ENCODE measurements at regions of chr4 and their contacts with region 1.

Region 1: GRCh38 chr4:153497988-153498967 is 32.1 kb downstream of the TMEM131L start:
- DNase-seq: no peak
- H3K4me3 ChIP-seq: peak overlapping the region in 1 of 2 donors; percentile 38
- H3K4me3 Mint-ChIP-seq: peak overlapping the region; percentile 57 to 85 (median 80)
- H3K27ac ChIP-seq: peak overlapping the region; percentile 64
- H3K27ac Mint-ChIP-seq: peak overlapping the region; percentile 94 to 99 (median 97)
- H3K4me1 ChIP-seq: peaks cover 98% of the 10 kb centered on the region
- H3K4me1 Mint-ChIP-seq: peaks cover 76 to 100% (median 86%) of the 10 kb centered on the region in 4 donors
- H3K27me3 ChIP-seq: no peaks in the 10 kb centered on the region
- H3K27me3 Mint-ChIP-seq: no peaks in the 10 kb centered on the region

Region 2: DNA sequence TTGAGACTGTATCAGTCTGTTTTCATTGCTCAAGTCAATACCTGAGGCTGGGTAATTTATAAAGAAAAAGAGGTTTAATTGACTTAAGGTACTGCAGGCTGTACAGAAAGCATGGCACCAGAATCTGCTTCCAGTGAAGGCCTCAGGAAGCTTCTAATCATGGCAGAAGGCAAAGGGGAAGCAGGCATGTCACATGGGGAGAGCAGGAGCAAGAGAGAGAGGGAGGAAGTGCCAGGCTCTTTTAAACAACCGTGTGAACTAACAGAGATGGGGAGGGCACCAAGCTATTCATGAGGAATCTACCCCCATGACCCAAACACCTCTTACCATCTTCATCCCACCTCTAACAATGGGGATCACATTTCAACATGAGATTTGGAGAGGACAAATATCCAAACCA is 39.3 kb before region 1 on chr4:
- CTCF ChIA-PET with region 1: no interaction called
- POLR2A ChIA-PET with region 1: no interaction called
- intact Hi-C with region 1: no loop called
- DNase-seq: no peak
- H3K4me3 ChIP-seq: no peak overlapping the region
- H3K4me3 Mint-ChIP-seq: no peak overlapping the region
- H3K27ac ChIP-seq: no peak overlapping the region
- H3K27ac Mint-ChIP-seq: peak overlapping the region in 1 of 7 donors; percentile 52
- H3K4me1 ChIP-seq: no peaks in the 10 kb centered on the region
- H3K4me1 Mint-ChIP-seq: peaks cover under 1 to 3% (median 2%) of the 10 kb centered on the region in 4 donors
- H3K27me3 ChIP-seq: no peaks in the 10 kb centered on the region
- H3K27me3 Mint-ChIP-seq: no peaks in the 10 kb centered on the region

Region 3: GRCh38 chr4:153488006-153488891 is 10.0 kb before region 1 on chr4:
- CTCF ChIA-PET with region 1: interaction called, 34 read pairs
- POLR2A ChIA-PET with region 1: interaction called, 546 read pairs
- intact Hi-C with region 1: loop called (anchors 1 kb)
- DNase-seq: peak; percentile 81 to 94 (median 82)
- H3K4me3 ChIP-seq: peak overlapping the region; percentile 25 to 54
- H3K4me3 Mint-ChIP-seq: peak overlapping the region; percentile 78 to 92 (median 88)
- H3K27ac ChIP-seq: peak overlapping the region; percentile 88
- H3K27ac Mint-ChIP-seq: peak overlapping the region; percentile 94 to 99 (median 96)
- H3K4me1 ChIP-seq: peaks cover 90% of the 10 kb centered on the region
- H3K4me1 Mint-ChIP-seq: peaks cover 64 to 87% (median 73%) of the 10 kb centered on the region in 4 donors
- H3K27me3 ChIP-seq: no peaks in the 10 kb centered on the region
- H3K27me3 Mint-ChIP-seq: peaks cover 0 to 2% of the 10 kb centered on the region in 2 donors

Region 4: DNA sequence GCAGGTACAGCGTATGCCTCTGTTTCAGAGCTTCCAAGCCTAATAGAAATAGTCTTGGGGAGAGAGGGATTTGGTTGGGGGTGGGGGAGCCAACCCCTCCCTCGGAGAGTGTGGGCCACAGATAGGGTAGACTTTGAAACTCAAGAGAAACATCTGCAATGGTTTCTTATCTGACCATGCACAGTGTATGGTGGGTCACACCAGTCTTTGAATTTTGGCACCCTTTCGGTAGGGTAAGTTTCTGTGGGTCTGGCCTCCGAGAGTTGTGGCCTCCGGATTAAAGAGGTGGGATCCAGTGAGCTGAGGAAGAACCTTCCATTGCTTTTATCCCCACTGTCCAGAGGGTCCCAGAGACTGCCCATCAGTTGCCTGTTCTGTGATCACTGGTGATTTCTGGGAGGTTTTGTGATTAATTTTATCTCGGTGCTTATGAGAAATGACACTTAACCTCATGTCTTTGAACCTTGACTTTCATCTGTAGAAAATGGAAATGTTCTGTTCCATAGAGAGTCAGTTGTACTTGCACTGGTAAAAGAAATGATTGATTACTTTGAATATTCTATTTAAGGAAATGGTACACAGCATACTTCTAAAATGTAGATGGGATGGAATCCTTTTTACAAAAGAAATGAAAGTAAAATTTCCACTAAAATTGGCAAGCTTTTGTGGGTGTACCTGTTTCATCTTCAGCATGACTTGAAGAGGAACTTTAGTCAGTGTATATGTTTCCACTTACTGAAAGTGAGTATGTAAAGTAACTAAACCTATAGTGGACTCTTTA is 30.6 kb after region 1 on chr4:
- CTCF ChIA-PET with region 1: interaction called, 10 read pairs
- POLR2A ChIA-PET with region 1: interaction called, 236 read pairs
- intact Hi-C with region 1: no loop called
- DNase-seq: no peak
- H3K4me3 ChIP-seq: peak overlapping the region; percentile 23 to 37
- H3K4me3 Mint-ChIP-seq: peak overlapping the region; percentile 11 to 87 (median 80)
- H3K27ac ChIP-seq: peak overlapping the region; percentile 54
- H3K27ac Mint-ChIP-seq: peak overlapping the region; percentile 75 to 94 (median 90)
- H3K4me1 ChIP-seq: peaks cover 98% of the 10 kb centered on the region
- H3K4me1 Mint-ChIP-seq: peaks cover 70 to 93% (median 85%) of the 10 kb centered on the region in 4 donors
- H3K27me3 ChIP-seq: no peaks in the 10 kb centered on the region
- H3K27me3 Mint-ChIP-seq: no peaks in the 10 kb centered on the region

Region 5: DNA sequence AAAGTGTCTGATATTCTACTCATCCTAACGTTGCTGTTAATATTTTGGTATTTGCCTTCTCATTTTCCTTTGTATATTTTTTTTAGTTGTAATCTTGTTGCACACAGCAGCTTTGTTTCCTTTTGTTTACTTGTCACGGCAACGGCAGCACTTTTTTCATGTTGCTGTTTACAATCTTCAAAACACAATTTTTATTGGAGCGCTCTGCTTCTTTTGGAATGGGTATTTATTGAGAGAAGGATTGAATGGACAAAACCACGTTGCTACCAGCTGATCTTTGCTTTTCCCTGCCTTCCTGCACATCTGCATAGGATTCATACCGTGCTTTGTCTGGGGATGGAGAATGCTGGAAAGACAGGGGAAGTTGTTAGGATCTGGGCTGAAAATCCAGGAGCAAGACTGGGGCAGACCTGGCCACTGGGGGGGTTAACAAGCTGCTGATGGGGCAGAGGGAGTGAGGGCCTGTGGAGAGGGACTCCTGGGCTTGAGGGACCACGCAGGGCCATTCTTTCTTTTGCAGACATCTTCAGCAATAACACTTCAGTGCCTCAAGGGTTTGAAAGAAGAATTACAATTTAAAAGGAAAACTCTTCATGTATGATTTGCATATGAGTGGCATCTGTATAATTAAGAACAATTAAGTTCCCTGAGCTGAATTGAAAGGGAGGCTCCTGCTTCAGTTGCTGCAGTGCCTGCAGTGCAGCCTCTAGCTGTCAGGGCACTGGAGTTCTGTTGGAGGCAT is 37.7 kb after region 1 on chr4:
- CTCF ChIA-PET with region 1: interaction called, 12 read pairs
- POLR2A ChIA-PET with region 1: interaction called, 17 read pairs
- intact Hi-C with region 1: no loop called
- DNase-seq: peak in 4 of 5 donors; percentile 26 to 51 (median 33)
- H3K4me3 ChIP-seq: no peak overlapping the region
- H3K4me3 Mint-ChIP-seq: peak overlapping the region; percentile 48 to 90 (median 76)
- H3K27ac ChIP-seq: peak overlapping the region; percentile 23
- H3K27ac Mint-ChIP-seq: peak overlapping the region; percentile 90 to 96 (median 94)
- H3K4me1 ChIP-seq: peaks cover 96% of the 10 kb centered on the region
- H3K4me1 Mint-ChIP-seq: peaks cover 59 to 93% (median 80%) of the 10 kb centered on the region in 4 donors
- H3K27me3 ChIP-seq: no peaks in the 10 kb centered on the region
- H3K27me3 Mint-ChIP-seq: no peaks in the 10 kb centered on the region

Region 6: GRCh38 chr4:153541456-153542096 is 43.3 kb after region 1 on chr4:
- CTCF ChIA-PET with region 1: interaction called, 12 read pairs
- POLR2A ChIA-PET with region 1: interaction called, 10 read pairs
- intact Hi-C with region 1: no loop called
- DNase-seq: no peak
- H3K4me3 ChIP-seq: no peak overlapping the region
- H3K4me3 Mint-ChIP-seq: peak overlapping the region in 7 of 8 donors; percentile 17 to 77 (median 41)
- H3K27ac ChIP-seq: no peak overlapping the region
- H3K27ac Mint-ChIP-seq: peak overlapping the region; percentile 33 to 87 (median 75)
- H3K4me1 ChIP-seq: peaks cover 78% of the 10 kb centered on the region
- H3K4me1 Mint-ChIP-seq: peaks cover 51 to 87% (median 74%) of the 10 kb centered on the region in 4 donors
- H3K27me3 ChIP-seq: no peaks in the 10 kb centered on the region
- H3K27me3 Mint-ChIP-seq: no peaks in the 10 kb centered on the region

Region 7: DNA sequence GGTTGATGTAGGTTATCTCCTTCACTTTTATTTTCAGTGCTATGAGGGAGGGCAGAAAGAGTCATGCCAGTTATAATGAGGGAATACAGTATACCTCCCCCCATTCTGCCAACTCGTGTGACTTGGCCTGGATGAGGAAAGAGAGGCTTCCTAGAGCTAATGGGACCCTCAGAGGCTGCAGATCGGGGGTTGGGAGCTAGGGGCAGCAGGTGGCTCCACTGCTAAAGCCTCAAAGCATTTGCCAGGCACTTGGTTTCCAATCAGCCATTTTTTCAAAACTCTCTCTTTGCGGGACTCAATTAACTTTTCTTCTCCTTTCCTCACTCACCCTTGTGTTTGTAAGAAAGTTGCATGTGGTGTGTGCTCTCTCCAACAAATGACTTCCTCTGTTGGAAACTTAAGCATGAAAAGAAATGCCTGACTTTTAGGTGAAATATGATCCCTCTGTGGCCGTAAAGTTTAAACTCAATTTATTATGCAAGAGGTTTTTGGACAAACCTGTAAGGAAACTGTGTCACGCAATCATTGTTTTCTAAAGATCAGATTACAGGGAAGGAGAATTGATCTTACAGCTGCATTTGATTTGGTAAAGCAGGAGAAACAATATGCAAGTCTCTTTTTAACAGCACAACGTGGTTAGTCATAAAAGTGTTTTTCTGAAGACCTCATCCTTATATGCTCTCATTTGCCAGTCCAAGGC is 283.6 kb after region 1 on chr4:
- CTCF ChIA-PET with region 1: no interaction called
- POLR2A ChIA-PET with region 1: no interaction called
- intact Hi-C with region 1: no loop called
- DNase-seq: no peak
- H3K4me3 ChIP-seq: no peak overlapping the region
- H3K4me3 Mint-ChIP-seq: no peak overlapping the region
- H3K27ac ChIP-seq: no peak overlapping the region
- H3K27ac Mint-ChIP-seq: no peak overlapping the region
- H3K4me1 ChIP-seq: no peaks in the 10 kb centered on the region
- H3K4me1 Mint-ChIP-seq: no peaks in the 10 kb centered on the region
- H3K27me3 ChIP-seq: peaks cover 4% of the 10 kb centered on the region
- H3K27me3 Mint-ChIP-seq: peaks cover 34 to 59% of the 10 kb centered on the region in 2 donors

Measured in CD4-positive, alpha-beta memory T cell (primary cell).